ENCODE measurements at regions of chr7 and their contacts with region 1.

Region 1: GRCh38 chr7:36487756-36488336 is 98.2 kb downstream of the ANLN start:
- DNase-seq: no peak
- ATAC-seq: no peak

Region 2: GRCh38 chr7:36547416-36547815 is 59.6 kb after region 1 on chr7:
- intact Hi-C with region 1: no loop called
- DNase-seq: no peak
- ATAC-seq: no peak

Region 3: GRCh38 chr7:36670585-36671431 is 183.0 kb after region 1 on chr7:
- intact Hi-C with region 1: loop called (anchors 5 kb)
- DNase-seq: no peak
- ATAC-seq: peak; percentile 46